ENCODE measurements at regions of chr3 and their contacts with region 1.

Region 1: DNA sequence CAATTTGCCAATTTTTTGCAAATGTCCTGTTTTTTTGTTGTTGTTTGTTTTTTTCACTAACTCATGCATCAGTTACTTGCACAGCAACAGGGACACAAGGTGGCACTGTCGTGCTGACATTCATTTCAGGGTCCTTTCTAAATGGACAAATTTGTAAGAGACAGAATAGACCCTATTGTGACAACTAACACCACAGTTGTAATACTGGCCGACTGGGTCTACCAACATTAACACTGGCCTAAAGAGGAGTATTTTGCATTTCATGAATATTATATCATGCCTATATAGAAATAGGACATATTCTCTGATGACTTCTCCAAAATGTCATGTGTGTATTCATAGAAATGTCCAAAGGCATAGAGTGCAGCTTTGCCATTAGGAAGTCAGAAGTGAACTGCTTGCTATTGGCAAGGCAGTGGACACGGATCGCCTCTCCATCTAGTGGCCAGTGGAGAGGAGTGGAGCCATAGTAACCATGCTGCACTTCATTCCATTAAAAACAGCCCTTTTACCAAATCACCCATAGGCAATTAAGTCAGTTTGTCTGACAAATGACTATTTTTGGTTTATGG is 54.8 kb downstream of the ZBTB20 start:
- DNase-seq: peak; percentile 55
- ATAC-seq: peak; percentile 100
- H3K4me3 ChIP-seq: no peak overlapping the region
- H3K27ac ChIP-seq: no peak overlapping the region
- H3K4me1 ChIP-seq: no peaks in the 10 kb centered on the region
- H3K27me3 ChIP-seq: 0 out of 2 replicates have a peak, but pooled peaks cover 5% of the 10 kb centered on the region
- CTCF ChIP-seq: peak; percentile 77

Region 2: GRCh38 chr3:114168150-114168549 is 924.2 kb before region 1 on chr3:
- CTCF ChIA-PET with region 1: no interaction called
- POLR2A ChIA-PET with region 1: no interaction called
- intact Hi-C with region 1: no loop called
- DNase-seq: no peak
- ATAC-seq: no peak
- H3K4me3 ChIP-seq: no peak overlapping the region
- H3K27ac ChIP-seq: no peak overlapping the region
- H3K4me1 ChIP-seq: no peaks in the 10 kb centered on the region
- H3K27me3 ChIP-seq: peaks cover 47% of the 10 kb centered on the region
- CTCF ChIP-seq: no peak

Region 3: GRCh38 chr3:114252954-114253353 is 839.4 kb before region 1 on chr3:
- CTCF ChIA-PET with region 1: no interaction called
- POLR2A ChIA-PET with region 1: no interaction called
- intact Hi-C with region 1: no loop called
- DNase-seq: no peak
- ATAC-seq: no peak
- H3K4me3 ChIP-seq: no peak overlapping the region
- H3K27ac ChIP-seq: no peak overlapping the region
- H3K4me1 ChIP-seq: no peaks in the 10 kb centered on the region
- H3K27me3 ChIP-seq: no peaks in the 10 kb centered on the region
- CTCF ChIP-seq: no peak

Region 4: GRCh38 chr3:114527036-114527644 is 565.2 kb before region 1 on chr3:
- CTCF ChIA-PET with region 1: no interaction called
- POLR2A ChIA-PET with region 1: no interaction called
- intact Hi-C with region 1: loop called (anchors 10 kb)
- DNase-seq: peak; percentile 27
- ATAC-seq: peak; percentile 70; the same call in 1 of the 2 replicates
- H3K4me3 ChIP-seq: no peak overlapping the region
- H3K27ac ChIP-seq: no peak overlapping the region
- H3K4me1 ChIP-seq: no peaks in the 10 kb centered on the region
- H3K27me3 ChIP-seq: no peaks in the 10 kb centered on the region
- CTCF ChIP-seq: peak; percentile 61

Region 5: DNA sequence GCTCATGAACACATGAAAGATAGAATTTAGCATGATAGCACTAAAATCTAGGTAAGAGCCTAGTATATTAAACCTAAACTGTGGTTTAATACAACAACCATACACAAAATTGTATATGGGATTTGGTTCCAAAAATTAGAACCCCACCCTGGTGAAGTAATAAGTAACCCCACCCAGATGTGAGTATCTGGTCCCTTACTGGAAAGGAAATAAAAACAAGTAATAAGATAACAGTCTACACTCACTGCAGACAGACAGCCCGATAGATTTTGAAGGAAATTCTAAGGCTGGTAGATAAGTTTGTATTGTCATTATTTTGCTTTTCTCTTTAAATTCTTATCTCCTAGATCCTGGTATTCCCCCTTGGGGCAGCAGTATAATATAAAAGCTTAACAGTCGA is 130.1 kb before region 1 on chr3:
- CTCF ChIA-PET with region 1: no interaction called
- POLR2A ChIA-PET with region 1: no interaction called
- intact Hi-C with region 1: no loop called
- DNase-seq: no peak
- ATAC-seq: no peak
- H3K4me3 ChIP-seq: no peak overlapping the region
- H3K27ac ChIP-seq: no peak overlapping the region
- H3K4me1 ChIP-seq: no peaks in the 10 kb centered on the region
- H3K27me3 ChIP-seq: no peaks in the 10 kb centered on the region
- CTCF ChIP-seq: no peak

Region 6: GRCh38 chr3:115040673-115041286 is 51.5 kb before region 1 on chr3:
- CTCF ChIA-PET with region 1: no interaction called
- POLR2A ChIA-PET with region 1: no interaction called
- intact Hi-C with region 1: loop called (anchors 1 kb)
- DNase-seq: peak; percentile 63
- ATAC-seq: peak; percentile 78
- H3K4me3 ChIP-seq: no peak overlapping the region
- H3K27ac ChIP-seq: no peak overlapping the region
- H3K4me1 ChIP-seq: no peaks in the 10 kb centered on the region
- H3K27me3 ChIP-seq: no peaks in the 10 kb centered on the region
- CTCF ChIP-seq: peak; percentile 86

Region 7: GRCh38 chr3:115169808-115170207 is 77.5 kb after region 1 on chr3:
- CTCF ChIA-PET with region 1: no interaction called
- POLR2A ChIA-PET with region 1: no interaction called
- intact Hi-C with region 1: loop called (anchors 1 kb)
- DNase-seq: peak; percentile 20
- ATAC-seq: no peak
- H3K4me3 ChIP-seq: no peak overlapping the region
- H3K27ac ChIP-seq: no peak overlapping the region
- H3K4me1 ChIP-seq: no peaks in the 10 kb centered on the region
- H3K27me3 ChIP-seq: peaks cover 3% of the 10 kb centered on the region; the same call in 1 of the 2 replicates
- CTCF ChIP-seq: peak; percentile 53

Region 8: DNA sequence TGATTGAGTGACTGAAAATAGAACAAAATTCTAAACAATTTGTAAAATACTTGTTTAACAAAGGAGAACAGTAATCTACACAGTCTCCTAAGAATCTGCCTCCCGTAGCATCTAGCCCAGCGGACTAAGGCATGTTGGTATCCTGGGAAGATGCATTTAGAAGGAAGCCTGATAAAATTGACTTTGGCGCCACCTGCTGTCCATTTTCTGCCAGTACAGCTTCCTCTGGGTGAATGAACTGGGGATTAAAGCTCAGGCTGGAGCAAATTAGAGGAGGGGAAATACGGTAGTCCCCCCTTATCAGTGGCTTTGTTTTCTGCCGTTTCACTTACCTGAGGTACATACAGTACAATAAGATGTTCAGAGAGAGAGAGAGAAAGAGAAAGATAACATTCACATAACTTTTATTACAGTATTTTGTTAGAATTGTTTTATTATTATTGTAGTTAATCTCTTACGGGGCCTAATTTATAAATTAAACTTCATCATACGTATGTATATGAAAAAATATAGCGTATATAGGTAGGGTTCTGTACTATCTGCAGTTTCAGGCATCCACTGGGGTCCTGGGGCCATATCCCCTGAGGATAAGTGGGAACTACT is 722.6 kb after region 1 on chr3:
- CTCF ChIA-PET with region 1: no interaction called
- POLR2A ChIA-PET with region 1: interaction called, 8 read pairs
- intact Hi-C with region 1: loop called (anchors 2 kb)
- DNase-seq: peak; percentile 94
- ATAC-seq: peak; percentile 89
- H3K4me3 ChIP-seq: no peak overlapping the region
- H3K27ac ChIP-seq: no peak overlapping the region
- H3K4me1 ChIP-seq: peaks cover 8% of the 10 kb centered on the region; the same call in 1 of the 2 replicates
- H3K27me3 ChIP-seq: no peaks in the 10 kb centered on the region
- CTCF ChIP-seq: peak; percentile 97

Region 9: DNA sequence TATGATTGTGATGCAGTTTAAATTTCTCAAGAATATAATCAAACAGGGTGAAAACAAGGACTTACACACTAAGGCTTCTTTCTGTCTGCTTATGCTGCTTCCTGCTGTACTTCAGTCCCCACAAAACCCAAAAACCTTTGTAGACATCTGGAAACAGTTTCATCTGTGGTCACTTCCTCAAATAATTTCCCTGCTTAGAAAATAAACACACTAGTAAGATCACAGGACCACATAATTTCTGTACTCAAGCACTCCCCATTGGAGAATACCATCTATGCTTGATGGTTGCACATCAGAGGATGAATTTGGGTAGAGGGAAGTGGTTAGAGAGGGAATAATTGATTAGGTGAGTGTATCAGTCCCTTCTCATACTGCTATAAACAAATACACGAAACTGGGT is 1086.8 kb after region 1 on chr3:
- CTCF ChIA-PET with region 1: no interaction called
- POLR2A ChIA-PET with region 1: no interaction called
- intact Hi-C with region 1: no loop called
- DNase-seq: no peak
- ATAC-seq: no peak
- H3K4me3 ChIP-seq: no peak overlapping the region
- H3K27ac ChIP-seq: no peak overlapping the region
- H3K4me1 ChIP-seq: no peaks in the 10 kb centered on the region
- H3K27me3 ChIP-seq: no peaks in the 10 kb centered on the region
- CTCF ChIP-seq: no peak

Measured in PC-3 (cell line).